ENCODE measurements at regions of chr20 and their contacts with region 1.

Region 1: DNA sequence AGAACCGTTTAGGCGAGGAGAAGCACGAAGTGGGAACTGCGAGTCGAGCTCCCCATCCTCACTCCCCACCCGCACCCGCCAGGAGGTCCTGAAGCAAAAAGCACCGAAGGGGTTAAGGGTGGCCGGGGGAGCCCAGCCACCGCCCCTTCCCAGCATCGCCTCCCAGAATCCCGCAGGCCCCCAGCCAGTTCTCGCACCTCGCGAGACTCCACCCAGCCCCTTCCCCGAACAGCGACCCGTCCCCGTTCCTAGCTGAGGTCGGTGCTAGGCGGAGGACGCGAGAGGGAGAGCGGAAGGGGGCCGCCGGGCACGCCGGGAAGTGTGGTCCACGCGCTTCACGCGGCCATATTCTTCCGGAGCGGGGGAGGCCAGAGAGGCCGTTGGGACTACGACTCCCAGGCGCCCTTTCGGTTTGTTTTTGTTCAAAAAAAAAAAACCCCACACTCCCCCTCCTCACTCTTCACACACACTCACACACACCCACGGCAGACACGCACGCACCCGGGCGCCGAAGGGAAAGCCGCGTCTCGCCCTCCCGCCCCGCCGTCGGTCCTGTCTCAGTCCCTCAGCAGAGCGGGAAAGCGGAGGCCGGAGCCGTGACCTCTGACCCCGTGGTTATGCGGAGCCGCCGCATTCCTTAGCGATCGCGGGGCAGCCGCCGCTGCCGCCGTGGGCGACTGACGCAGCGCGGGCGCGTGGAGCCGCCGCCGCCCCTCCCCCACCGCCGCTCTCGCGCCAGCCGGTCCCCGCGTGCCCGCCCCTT is at the start of gene ASXL1:
- DNase-seq: peak; percentile 99
- H3K4me3 Mint-ChIP-seq: peak within 1 kb of the TSS; percentile 90
- H3K27ac Mint-ChIP-seq: peak within 1 kb of the TSS; percentile 100
- H3K4me1 Mint-ChIP-seq: peaks cover 53% of the 10 kb centered on the region
- H3K27me3 Mint-ChIP-seq: no peaks in the 10 kb centered on the region
- total RNA-seq, gene ASXL1: 126 and 142 TPM in 2 replicates

Region 2: GRCh38 chr20:32249030-32249738 is 108.9 kb before region 1 on chr20:
- intact Hi-C with region 1: loop called (anchors 1 kb)
- DNase-seq: peak; percentile 85
- H3K4me3 Mint-ChIP-seq: peak overlapping the region; percentile 56
- H3K27ac Mint-ChIP-seq: peak overlapping the region; percentile 90
- H3K4me1 Mint-ChIP-seq: peaks cover 49% of the 10 kb centered on the region
- H3K27me3 Mint-ChIP-seq: no peaks in the 10 kb centered on the region

Region 3: DNA sequence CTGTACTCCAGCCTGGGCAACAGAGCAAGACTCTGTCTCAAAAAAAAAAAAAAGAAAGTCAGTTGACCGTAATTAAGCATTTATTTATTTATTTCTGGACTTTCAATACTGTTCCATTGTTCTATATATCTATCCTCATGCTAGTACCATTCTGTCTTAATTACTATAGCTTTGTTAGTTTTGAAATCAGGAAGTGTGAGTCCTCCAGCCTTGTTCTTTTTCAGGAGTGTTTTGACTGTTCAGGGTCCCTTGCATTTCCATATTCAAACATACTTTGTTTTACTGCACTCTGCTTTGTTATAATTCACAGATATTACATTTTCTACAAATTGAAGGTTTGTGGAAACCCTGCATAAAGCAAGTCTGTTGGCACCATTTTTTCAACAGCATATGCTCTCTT is 36.7 kb before region 1 on chr20:
- intact Hi-C with region 1: loop called (anchors 5 kb)
- DNase-seq: no peak
- H3K4me3 Mint-ChIP-seq: no peak overlapping the region
- H3K27ac Mint-ChIP-seq: no peak overlapping the region
- H3K4me1 Mint-ChIP-seq: peaks cover 4% of the 10 kb centered on the region
- H3K27me3 Mint-ChIP-seq: no peaks in the 10 kb centered on the region

Region 4: DNA sequence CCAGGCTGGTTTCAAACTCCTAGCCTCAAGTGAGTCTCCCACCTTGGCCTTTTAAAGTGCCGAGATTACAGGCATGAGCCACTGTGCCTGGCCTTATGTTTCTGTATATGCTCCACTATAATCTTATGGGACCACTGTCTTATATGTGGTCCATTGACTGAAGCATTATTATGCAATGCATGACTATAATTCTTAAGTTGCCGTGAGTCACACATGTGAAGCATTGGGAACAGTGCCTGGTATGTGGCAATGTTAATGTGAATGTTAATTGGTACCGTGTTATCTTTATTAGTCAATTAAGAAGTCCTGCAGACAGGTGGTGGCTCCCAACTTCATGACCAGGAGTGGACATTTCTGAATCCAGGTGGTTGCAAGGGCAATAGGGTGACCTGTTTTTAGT is 14.6 kb before region 1 on chr20:
- intact Hi-C with region 1: no loop called
- DNase-seq: no peak
- H3K4me3 Mint-ChIP-seq: no peak overlapping the region
- H3K27ac Mint-ChIP-seq: no peak overlapping the region
- H3K4me1 Mint-ChIP-seq: no peaks in the 10 kb centered on the region
- H3K27me3 Mint-ChIP-seq: no peaks in the 10 kb centered on the region

Region 5: GRCh38 chr20:32387252-32387651 is 29.2 kb after region 1 on chr20:
- intact Hi-C with region 1: loop called (anchors 1 kb)
- DNase-seq: peak; percentile 87
- H3K4me3 Mint-ChIP-seq: peak overlapping the region; percentile 39
- H3K27ac Mint-ChIP-seq: peak overlapping the region; percentile 13
- H3K4me1 Mint-ChIP-seq: peaks cover 34% of the 10 kb centered on the region
- H3K27me3 Mint-ChIP-seq: no peaks in the 10 kb centered on the region